ENCODE measurements at regions of chr9 and their contacts with region 1.

Region 1: DNA sequence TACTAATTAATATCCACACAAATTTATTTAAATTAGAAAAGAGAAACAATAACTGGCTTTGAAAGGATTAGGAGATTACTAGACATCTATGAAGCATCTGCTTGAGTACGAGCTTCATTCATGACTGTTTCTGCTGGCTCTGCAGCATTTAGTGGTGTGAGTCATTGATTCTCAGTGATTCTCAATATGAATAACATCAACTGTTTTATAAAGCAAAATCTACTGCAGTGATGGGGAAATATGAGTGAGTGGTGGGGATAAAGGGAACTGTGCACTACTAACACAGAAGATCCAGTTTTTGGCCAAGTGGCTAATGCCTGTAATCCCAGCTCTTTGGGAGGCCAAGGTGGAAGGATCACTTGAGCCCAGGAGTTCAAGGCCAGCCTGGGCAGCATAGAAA is 8.4 kb downstream of the FNBP1 start:
- DNase-seq: peak; percentile 61
- ATAC-seq: peak; percentile 53
- H3K4me3 Mint-ChIP-seq: peak overlapping the region; percentile 97
- H3K27ac Mint-ChIP-seq: peak overlapping the region; percentile 100
- H3K4me1 Mint-ChIP-seq: peaks cover 74% of the 10 kb centered on the region
- H3K27me3 Mint-ChIP-seq: no peaks in the 10 kb centered on the region
- CTCF ChIP-seq: no peak

Region 2: DNA sequence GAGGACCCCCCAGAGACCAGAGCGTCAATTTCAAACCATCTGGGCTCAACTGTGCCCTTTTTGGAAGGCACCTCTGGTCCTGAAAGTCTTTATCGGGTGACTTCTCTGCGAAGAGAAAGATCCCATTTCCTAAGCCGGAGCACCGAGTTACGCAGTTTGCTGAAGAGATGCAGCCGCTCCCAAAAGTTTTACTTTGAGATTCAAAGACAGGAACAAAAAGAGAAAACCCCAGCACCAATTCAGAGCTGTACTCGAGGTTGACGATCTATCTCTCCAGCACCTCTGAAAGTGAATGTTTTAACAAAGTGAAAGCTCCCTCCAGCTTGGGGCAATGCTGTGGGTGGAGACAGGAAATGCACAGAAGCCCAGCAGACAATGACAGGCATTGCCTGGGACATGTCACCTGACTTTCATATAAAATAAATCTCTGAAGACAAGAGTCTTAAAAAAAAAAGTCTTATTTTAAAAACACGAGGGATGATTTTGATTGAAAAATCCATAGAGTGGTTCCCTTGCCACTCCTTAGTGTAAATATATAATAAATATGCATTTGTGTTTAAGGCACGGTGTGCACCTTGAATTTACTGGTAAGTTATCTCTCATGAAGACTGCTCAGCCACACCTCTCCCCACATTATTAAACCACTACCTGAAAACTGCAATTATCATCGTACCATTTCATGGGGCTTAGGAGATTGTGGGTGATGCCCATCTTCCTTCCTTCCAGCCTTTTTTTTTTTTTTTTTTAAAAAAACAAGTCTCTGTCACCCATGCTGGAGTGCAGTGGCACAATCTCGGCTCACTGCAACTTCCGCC is 71.5 kb before region 1 on chr9:
- CTCF ChIA-PET with region 1: interaction called, 5 read pairs
- POLR2A ChIA-PET with region 1: interaction called, 12 read pairs
- intact Hi-C with region 1: no loop called
- DNase-seq: peak; percentile 86
- ATAC-seq: peak; percentile 93
- H3K4me3 Mint-ChIP-seq: peak overlapping the region; percentile 79
- H3K27ac Mint-ChIP-seq: peak overlapping the region; percentile 89
- H3K4me1 Mint-ChIP-seq: peaks cover 82% of the 10 kb centered on the region
- H3K27me3 Mint-ChIP-seq: no peaks in the 10 kb centered on the region
- CTCF ChIP-seq: no peak

Region 3: DNA sequence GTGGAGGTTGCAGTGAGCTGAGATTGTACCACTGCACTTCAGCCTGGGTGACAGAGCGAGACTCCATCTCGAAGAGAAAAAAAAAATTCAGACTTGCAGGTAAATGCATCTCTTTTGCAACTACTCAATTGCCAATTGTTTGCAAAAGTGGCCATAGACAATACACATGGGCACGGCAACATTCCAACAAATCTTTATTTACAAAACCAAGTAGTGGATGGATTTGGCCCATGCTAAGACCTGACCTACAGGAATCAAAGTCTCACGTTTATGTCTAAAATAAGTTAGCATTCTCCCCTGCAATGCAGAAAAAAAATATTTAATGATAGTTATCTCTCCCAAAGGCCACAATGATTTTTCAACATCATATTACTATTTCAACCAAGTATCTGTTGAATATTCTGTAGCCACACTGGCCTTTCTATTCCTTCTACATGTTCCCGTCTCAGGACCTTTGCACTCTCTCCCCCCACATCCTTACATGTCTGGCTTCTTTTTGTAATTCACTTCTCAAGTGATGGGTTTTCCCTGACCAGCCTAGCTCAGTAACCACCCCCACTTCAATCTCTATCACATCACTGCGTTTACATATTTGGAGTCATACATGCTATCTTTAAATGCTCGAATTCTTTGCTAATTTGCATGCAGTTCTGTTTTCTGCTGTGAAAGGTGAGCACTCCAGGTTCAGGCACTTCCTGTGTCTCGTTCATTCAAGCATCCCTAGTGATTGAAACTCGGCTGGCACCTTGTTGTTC is 45.8 kb before region 1 on chr9:
- CTCF ChIA-PET with region 1: interaction called, 8 read pairs
- POLR2A ChIA-PET with region 1: interaction called, 110 read pairs
- intact Hi-C with region 1: loop called (anchors 5 kb)
- DNase-seq: peak; percentile 42
- ATAC-seq: peak; percentile 51
- H3K4me3 Mint-ChIP-seq: peak overlapping the region; percentile 31
- H3K27ac Mint-ChIP-seq: peak overlapping the region; percentile 93
- H3K4me1 Mint-ChIP-seq: peaks cover 75% of the 10 kb centered on the region
- H3K27me3 Mint-ChIP-seq: no peaks in the 10 kb centered on the region
- CTCF ChIP-seq: no peak

Region 4: DNA sequence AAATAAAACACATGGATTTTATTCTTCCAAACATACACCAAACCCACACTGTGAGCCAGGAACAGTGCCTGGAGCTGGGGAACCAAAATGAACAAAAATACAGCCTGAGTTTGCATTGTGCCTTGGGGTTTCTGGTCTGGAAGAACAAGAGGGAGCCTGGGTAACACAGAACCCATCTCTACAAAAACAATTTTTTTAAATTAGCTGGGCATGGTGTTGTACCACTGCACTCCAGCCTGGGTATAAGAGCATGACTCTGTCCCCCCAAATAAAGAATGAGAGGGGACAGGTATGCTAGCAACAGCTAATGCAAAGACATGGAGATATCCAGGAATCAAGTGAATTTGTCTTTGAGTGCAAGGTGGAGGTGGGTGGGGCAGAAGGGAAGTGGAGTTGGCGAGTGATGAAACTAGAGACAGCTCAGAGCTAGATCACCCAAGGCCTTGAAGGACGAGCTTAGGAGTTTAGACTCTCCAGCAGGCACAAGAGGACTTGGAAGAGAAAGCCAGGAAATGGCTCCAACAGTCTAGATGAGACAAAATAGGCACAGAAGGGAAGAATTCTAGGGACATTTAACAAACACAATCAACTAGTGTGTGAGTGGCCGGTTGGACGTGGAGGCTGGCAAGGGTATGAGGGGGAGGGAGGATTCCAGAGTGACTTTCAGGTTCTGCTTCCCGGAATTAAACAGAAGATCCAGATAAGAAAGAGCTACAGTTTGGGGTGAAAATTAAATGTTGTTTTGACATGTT is 39.0 kb before region 1 on chr9:
- CTCF ChIA-PET with region 1: interaction called, 8 read pairs
- POLR2A ChIA-PET with region 1: interaction called, 110 read pairs
- intact Hi-C with region 1: loop called (anchors 5 kb)
- DNase-seq: peak; percentile 65
- ATAC-seq: peak; percentile 44
- H3K4me3 Mint-ChIP-seq: peak overlapping the region; percentile 57
- H3K27ac Mint-ChIP-seq: peak overlapping the region; percentile 97
- H3K4me1 Mint-ChIP-seq: peaks cover 70% of the 10 kb centered on the region
- H3K27me3 Mint-ChIP-seq: no peaks in the 10 kb centered on the region
- CTCF ChIP-seq: no peak

Region 5: DNA sequence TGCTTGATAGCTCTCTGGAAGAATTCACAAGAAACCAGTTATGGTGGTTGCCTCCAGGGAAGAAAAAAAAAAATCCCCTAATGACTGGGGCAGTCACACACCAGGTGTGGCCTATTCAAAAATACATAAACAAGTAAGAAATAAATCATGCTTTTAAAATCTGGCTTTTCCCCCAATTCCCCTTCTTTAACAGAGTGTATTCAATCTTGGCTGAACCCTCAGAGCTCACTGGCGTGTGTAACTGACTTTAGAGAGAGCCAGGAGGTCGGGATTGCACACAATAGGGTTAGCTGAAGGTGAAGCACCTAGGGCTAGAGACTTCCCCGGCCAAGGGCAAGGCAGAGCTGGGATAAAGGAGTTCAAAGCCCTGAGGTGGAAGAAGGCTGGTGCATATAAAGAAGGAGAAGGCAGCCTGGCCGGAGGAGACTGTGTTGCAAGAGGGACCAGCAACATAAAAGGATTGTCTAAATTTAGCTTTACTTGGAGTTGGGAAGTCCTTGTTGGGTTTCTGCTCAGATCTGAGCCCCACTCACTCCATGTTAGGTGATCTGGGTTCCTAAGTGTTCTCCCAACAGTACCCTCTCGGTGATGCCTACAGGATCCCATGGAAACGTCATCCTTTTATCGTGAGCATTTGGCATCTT is 11.3 kb before region 1 on chr9:
- CTCF ChIA-PET with region 1: interaction called, 8 read pairs
- POLR2A ChIA-PET with region 1: interaction called, 104 read pairs
- intact Hi-C with region 1: no loop called
- DNase-seq: no peak
- ATAC-seq: peak; percentile 67
- H3K4me3 Mint-ChIP-seq: peak overlapping the region; percentile 30
- H3K27ac Mint-ChIP-seq: peak overlapping the region; percentile 99
- H3K4me1 Mint-ChIP-seq: peaks cover 90% of the 10 kb centered on the region
- H3K27me3 Mint-ChIP-seq: no peaks in the 10 kb centered on the region
- CTCF ChIP-seq: no peak

Measured in activated CD8-positive, alpha-beta T cell treated with anti-CD3 and anti-CD28 coated beads for 36 hours (primary cell).